Ovary (tissue), 10 donors: ENCODE measurements at regions of chr15 and their contacts with region 1.

Region 1: GRCh38 chr15:81256916-81257315 is 60.2 kb downstream of the IL16 start:
- DNase-seq: no peak
- H3K4me3 ChIP-seq: no peak overlapping the region
- H3K27ac ChIP-seq: no peak overlapping the region
- H3K4me1 ChIP-seq: no peaks in the 10 kb centered on the region
- H3K27me3 ChIP-seq: no peaks in the 10 kb centered on the region
- CTCF ChIP-seq: peak in 2 of 3 donors; percentile 57 to 58
- EP300 ChIP-seq: no peak
- POLR2A ChIP-seq: no peak

Region 2: DNA sequence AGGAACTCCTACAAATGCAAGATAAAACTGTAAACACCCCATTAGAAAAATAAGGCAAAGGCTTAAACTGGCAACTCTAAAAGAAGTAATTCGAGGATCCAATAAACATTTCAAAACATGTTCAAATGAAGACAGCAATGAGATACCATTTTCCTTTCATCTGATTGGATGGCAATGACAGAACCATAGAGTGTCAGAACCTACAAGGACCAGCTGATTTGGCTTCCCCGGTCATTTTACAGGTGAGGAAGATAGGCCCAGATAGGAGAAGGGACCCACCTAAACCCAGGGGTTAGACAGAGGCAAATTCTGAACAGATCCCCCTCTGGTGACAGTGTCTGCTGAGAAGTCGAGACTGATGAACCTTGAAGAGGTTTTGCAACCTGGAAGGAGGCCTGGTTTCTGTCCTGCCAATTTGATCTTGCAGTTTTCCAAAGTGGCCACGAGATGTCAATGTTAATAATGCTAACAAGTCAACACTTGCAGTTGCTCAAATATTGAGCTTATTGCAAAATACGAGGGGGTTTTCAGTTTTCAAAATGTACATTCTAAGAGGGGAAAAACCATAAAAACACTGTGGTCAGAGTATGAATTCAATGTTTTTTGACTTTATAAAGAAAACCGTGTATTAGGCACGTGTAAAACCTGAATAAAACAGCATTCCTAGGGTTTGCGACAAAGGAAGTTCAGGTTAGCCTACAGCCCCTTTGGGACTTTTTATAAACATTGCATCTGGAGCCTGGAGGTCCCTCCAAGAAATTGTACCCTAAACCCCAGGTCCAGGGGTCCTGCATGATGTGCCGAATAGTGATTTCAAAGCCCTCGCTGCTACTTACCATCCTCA is 101.3 kb before region 1 on chr15:
- intact Hi-C with region 1: loop called in 2 of 4 experiments (anchors 2 to 5 kb)
- DNase-seq: peak in 3 of 5 donors; percentile 27 to 72 (median 43)
- H3K4me3 ChIP-seq: no peak overlapping the region
- H3K27ac ChIP-seq: no peak overlapping the region
- H3K4me1 ChIP-seq: peaks cover 1% of the 10 kb centered on the region
- H3K27me3 ChIP-seq: no peaks in the 10 kb centered on the region
- CTCF ChIP-seq: peak in 2 of 3 donors; percentile 59 to 78
- EP300 ChIP-seq: no peak
- POLR2A ChIP-seq: no peak

Region 3: GRCh38 chr15:81176291-81176893 is 80.5 kb before region 1 on chr15:
- intact Hi-C with region 1: loop called in 1 of 4 experiments (anchors 5 kb)
- DNase-seq: no peak
- H3K4me3 ChIP-seq: no peak overlapping the region
- H3K27ac ChIP-seq: no peak overlapping the region
- H3K4me1 ChIP-seq: peaks cover 2% of the 10 kb centered on the region
- H3K27me3 ChIP-seq: no peaks in the 10 kb centered on the region
- CTCF ChIP-seq: no peak
- EP300 ChIP-seq: no peak
- POLR2A ChIP-seq: no peak

Region 4: GRCh38 chr15:81189583-81190283 is 67.2 kb before region 1 on chr15:
- intact Hi-C with region 1: loop called in 1 of 4 experiments (anchors 10 kb)
- DNase-seq: peak in 4 of 5 donors; percentile 47 to 73 (median 64)
- H3K4me3 ChIP-seq: no peak overlapping the region
- H3K27ac ChIP-seq: peak overlapping the region; percentile 8 to 10
- H3K4me1 ChIP-seq: peaks cover 8% of the 10 kb centered on the region
- H3K27me3 ChIP-seq: no peaks in the 10 kb centered on the region
- CTCF ChIP-seq: no peak
- EP300 ChIP-seq: no peak
- POLR2A ChIP-seq: no peak